GM12878 (cell line): ENCODE measurements at regions of chr17 and their contacts with region 1.

Region 1: GRCh38 chr17:61805399-61805798 is 57.9 kb downstream of the BRIP1 start:
- DNase-seq: no peak
- ATAC-seq: no peak
- H3K4me3 ChIP-seq: no peak overlapping the region
- H3K27ac ChIP-seq: no peak overlapping the region
- H3K4me1 ChIP-seq: peaks cover under 1% of the 10 kb centered on the region; the same call in 1 of the 2 replicates
- H3K27me3 ChIP-seq: no peaks in the 10 kb centered on the region
- CTCF ChIP-seq: no peak
- EP300 ChIP-seq: no peak
- POLR2A ChIP-seq: no peak
- RAD21 ChIP-seq: no peak

Region 2: DNA sequence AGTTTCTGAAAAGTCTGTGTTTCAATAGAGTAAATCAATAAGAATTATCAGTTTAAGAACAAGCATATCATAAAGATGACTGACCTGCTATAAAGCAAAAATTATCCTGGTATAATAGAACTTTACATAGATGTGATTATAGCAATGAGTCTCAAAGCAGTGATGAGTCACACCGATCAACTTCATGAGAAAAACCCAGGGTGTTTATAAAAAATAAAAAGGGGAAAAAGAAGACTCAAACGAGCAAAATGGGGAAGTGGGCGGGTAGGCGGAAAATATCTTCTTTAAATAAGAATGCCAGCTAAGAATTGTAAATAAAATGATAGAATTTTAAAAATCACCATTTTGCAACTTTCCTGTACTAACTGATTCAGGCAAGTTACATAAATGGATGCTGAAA is 11.1 kb after region 1 on chr17:
- CTCF ChIA-PET with region 1: interaction called, 4 read pairs
- POLR2A ChIA-PET with region 1: interaction called, 6 read pairs
- RAD21 ChIA-PET with region 1: interaction called, 6 read pairs
- SMC1A ChIA-PET with region 1: interaction called, 15 read pairs
- in situ Hi-C with region 1: no loop called
- intact Hi-C with region 1: no loop called
- DNase-seq: no peak
- ATAC-seq: peak; percentile 54; the same call in 2 of the 3 replicates
- H3K4me3 ChIP-seq: no peak overlapping the region
- H3K27ac ChIP-seq: peak overlapping the region; percentile 45
- H3K4me1 ChIP-seq: peaks cover 5% of the 10 kb centered on the region
- H3K27me3 ChIP-seq: no peaks in the 10 kb centered on the region
- CTCF ChIP-seq: no peak
- EP300 ChIP-seq: no peak
- POLR2A ChIP-seq: no peak
- RAD21 ChIP-seq: no peak